ENCODE measurements at regions of chr2 and their contacts with region 1.

Region 1: GRCh38 chr2:238352361-238352760 is 32.0 kb downstream of the TRAF3IP1 start:
- DNase-seq: no peak
- H3K4me3 ChIP-seq: no peak overlapping the region
- H3K27ac ChIP-seq: no peak overlapping the region
- H3K4me1 ChIP-seq: no peaks in the 10 kb centered on the region
- H3K27me3 ChIP-seq: no peaks in the 10 kb centered on the region
- CTCF ChIP-seq: no peak
- POLR2A ChIP-seq: no peak

Region 2: DNA sequence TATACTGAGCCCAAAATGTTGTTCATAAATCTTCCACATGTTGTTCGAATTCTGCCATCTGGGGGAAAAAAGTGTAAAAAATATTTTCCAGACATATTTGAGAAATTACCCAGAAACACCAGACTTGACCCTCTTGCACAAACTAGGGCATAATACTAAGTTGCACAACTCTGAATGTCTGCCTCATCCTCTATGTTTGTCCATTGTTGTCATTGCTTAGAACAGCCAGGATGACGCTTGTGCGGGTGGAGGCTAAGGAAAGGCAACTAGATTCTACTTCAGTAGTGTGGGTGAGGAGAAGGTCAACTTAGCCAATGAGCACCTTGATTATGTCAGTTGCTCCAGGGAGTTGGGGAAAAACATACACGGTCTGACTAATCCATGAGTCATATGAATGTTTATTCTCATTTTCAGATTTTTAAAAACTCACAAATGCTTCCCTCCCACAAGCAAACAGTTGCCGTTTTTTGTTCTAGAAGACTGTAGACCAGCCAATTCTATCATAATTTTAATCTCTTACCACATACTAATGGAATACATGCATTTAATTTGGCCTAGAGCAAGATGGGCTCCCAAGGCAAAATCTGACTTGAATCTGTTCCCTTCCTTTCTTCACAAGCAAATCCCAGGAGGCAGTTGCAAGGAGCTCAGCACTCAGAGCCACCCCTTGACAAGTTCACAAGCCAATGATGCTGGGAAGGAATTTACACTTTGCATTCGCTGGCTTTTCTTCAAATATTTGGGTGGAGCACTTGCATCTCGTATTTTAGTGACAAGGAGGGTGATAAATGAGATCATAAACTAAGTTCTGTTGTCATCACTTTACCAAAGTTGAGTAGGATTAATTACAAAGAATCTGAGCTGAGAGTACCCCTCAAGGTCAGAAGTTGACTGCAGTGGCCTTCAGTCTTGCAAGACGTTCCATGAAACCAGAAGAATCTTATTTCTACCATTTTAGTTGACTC is 332.3 kb after region 1 on chr2:
- intact Hi-C with region 1: no loop called
- DNase-seq: no peak
- H3K4me3 ChIP-seq: no peak overlapping the region
- H3K27ac ChIP-seq: no peak overlapping the region
- H3K4me1 ChIP-seq: no peaks in the 10 kb centered on the region
- H3K27me3 ChIP-seq: no peaks in the 10 kb centered on the region
- CTCF ChIP-seq: no peak
- POLR2A ChIP-seq: no peak

Region 3: DNA sequence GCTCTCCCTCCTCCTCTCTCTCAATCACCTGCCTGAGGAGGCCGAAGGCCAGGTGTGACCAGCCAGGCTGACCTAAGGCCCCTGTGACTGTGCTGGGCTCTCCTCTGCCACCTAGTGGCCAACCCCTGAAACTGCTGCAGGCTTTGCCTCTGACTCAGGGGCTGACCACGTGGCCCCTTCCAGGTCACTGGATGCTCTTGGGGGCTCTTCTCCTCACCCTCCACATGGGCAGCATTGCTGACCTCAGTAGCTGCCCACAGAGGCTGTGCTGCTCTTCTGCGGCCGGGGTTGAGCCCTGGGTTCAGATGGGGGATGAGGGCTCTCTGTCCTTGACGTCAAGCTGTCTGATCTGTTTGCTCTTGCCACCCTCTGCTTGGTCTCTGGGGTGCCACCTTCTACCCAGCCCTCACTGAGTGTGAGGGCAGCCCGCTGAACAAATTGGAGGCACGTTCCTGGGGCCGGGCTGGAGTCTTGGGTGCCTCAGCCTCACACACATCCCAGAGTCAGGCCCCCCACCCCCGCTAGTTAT is 618.3 kb after region 1 on chr2:
- intact Hi-C with region 1: loop called (anchors 10 kb)
- DNase-seq: no peak
- H3K4me3 ChIP-seq: no peak overlapping the region
- H3K27ac ChIP-seq: no peak overlapping the region
- H3K4me1 ChIP-seq: no peaks in the 10 kb centered on the region
- H3K27me3 ChIP-seq: no peaks in the 10 kb centered on the region
- CTCF ChIP-seq: peak; percentile 89 to 98 (median 93)
- POLR2A ChIP-seq: no peak